K562 (cell line): ENCODE measurements at regions of chr2 and their contacts with region 1.

Region 1: GRCh38 chr2:58606799-58607198 is 365.7 kb upstream of the FANCL start:
- DNase-seq: peak in 1 of 4 experiments; percentile 19
- ATAC-seq: peak; percentile 89
- H3K4me3 ChIP-seq: no peak overlapping the region
- H3K27ac ChIP-seq: no peak overlapping the region
- H3K4me1 ChIP-seq: no peaks in the 10 kb centered on the region; a peak in 1 of 5 replicates
- H3K27me3 ChIP-seq: no peaks in the 10 kb centered on the region
- CTCF ChIP-seq: no peak
- EP300 ChIP-seq: peak; percentile 38; the same call in 1 of the 2 replicates
- POLR2A ChIP-seq: no peak
- RAD21 ChIP-seq: no peak

Region 2: DNA sequence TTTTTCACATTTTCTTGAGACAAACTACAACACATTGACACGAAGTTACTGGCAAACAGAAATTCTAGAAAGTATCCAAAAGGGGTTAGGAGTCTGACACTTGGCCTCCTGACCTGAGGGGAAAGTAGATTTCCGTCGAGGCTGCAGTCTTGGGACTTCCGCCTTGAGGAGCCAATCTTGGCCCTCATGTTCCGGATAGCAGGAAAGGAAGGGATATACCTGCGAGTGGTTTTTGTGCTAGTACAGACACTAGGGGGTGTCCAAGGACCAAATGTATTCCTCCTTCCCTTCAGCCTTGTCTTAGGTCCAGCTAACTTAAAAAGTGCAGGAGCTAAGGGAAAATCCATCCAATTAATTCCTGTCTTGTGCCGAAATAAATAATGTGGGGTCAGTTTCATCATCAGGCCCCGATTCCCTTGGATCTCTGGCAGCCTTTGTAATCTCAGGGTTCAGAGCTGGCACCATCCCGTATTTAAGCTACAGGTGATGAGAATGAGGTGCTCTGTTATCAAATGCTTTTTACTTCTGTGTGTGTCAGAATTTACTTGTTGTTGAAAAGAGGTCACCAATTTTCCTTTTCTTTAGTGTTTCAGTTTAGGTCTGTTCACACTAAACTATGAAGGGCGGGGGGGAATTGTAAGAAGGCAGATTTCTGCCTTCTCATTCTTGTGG is 35.5 kb before region 1 on chr2:
- CTCF ChIA-PET with region 1: no interaction called
- POLR2A ChIA-PET with region 1: no interaction called
- in situ Hi-C with region 1: no loop called
- intact Hi-C with region 1: no loop called
- DNase-seq: peak; percentile 46 to 85 (median 60)
- ATAC-seq: peak; percentile 99
- H3K4me3 ChIP-seq: no peak overlapping the region
- H3K27ac ChIP-seq: no peak overlapping the region; the same call in 2 of the 3 replicates
- H3K4me1 ChIP-seq: peaks cover 0 to 3% of the 10 kb centered on the region in 2 experiments; a peak in 1 of 5 replicates
- H3K27me3 ChIP-seq: no peaks in the 10 kb centered on the region
- CTCF ChIP-seq: peak; percentile 74 to 82 (median 76)
- EP300 ChIP-seq: no peak
- POLR2A ChIP-seq: no peak
- RAD21 ChIP-seq: peak; percentile 93 to 96

Region 3: DNA sequence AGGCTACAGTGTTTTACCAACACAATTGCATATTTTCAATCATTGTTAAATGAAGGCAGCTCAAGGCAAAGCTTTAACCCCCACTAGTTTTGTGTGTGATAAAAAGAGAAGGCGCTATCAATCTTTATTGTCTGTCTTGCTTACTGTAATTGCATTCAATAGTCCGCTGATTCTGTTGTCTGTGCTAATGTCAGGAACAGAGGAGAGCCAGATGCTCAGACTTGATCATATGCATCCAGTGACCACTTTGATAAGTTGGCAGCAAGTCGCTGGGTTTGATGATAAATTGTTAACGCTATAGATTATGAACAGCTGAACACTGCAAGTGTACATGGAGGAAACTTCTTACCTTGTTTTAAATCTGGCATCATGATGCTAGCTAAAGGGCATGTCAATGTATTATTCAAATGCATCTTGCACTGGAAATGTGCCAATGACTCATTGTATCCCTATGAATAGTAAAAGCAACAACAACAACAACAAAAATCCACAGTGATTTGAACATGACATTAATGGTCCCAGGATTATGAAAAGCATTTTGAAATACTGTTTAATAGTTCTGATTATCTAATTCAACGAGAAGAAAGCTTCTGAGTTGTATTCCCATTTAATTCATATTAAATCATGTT is 57.8 kb after region 1 on chr2:
- CTCF ChIA-PET with region 1: no interaction called
- POLR2A ChIA-PET with region 1: no interaction called
- in situ Hi-C with region 1: no loop called
- intact Hi-C with region 1: loop called (anchors 5 kb)
- DNase-seq: peak in 2 of 4 experiments; percentile 10 to 31
- ATAC-seq: no peak
- H3K4me3 ChIP-seq: no peak overlapping the region
- H3K27ac ChIP-seq: no peak overlapping the region
- H3K4me1 ChIP-seq: peaks cover 6 to 30% of the 10 kb centered on the region in 2 experiments; a peak in 4 of 5 replicates
- H3K27me3 ChIP-seq: no peaks in the 10 kb centered on the region
- CTCF ChIP-seq: no peak
- EP300 ChIP-seq: no peak
- POLR2A ChIP-seq: no peak
- RAD21 ChIP-seq: no peak